Mammary epithelial cell (primary cell): ENCODE measurements at regions of chr15 and their contacts with region 1.

Region 1: GRCh38 chr15:96177279-96177678 is 153.2 kb upstream of the NR2F2 start:
- DNase-seq: no peak
- H3K4me3 ChIP-seq: no peak overlapping the region
- H3K27ac ChIP-seq: no peak overlapping the region
- H3K4me1 ChIP-seq: no peaks in the 10 kb centered on the region
- H3K27me3 ChIP-seq: no peaks in the 10 kb centered on the region
- CTCF ChIP-seq: no peak

Region 2: DNA sequence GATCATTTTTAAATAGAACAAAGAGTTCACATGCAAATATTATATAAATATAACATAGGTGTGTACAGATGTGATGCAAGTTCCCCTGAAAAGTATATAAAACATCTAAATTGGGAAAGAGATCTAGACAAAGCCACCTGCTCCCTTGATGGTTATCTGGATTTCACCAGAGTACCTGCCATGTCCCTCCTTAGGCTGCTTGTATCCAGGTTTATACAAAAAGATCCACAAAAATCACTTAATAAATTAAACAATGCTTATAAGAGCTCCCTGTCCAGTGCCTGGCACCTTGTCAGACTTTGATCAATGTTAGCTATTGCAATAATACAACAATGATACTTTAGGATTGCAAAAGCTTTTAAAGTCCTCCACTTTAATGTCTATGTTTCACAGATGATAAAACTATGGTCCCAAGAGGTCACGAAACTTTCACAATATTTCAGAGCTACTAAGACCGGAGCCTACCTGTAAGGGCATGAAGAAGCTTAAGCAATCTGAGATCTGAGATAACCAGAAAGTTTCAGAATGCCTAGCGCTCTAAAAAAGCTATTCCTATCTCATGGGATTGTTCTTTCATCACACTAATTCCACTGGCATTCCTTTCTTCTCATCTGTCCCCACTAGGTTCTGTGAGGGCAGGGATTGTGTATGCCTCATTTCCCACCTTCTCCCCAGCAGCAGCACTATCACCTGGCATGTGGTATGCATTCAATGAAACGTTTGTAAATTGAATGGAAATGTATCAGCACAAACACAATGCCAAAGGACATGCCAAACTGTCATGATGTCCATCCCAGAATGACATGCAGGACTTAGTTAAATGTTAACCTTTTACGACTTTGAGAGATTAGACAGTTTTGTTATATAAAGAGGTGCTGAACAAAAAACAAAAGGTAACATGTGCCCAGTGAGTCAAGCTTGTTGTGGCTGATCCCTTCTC is 48.3 kb after region 1 on chr15:
- CTCF ChIA-PET with region 1: no interaction called
- dilution Hi-C with region 1: loop called (anchors 5 kb)
- in situ Hi-C with region 1: no loop called
- intact Hi-C with region 1: no loop called
- DNase-seq: peak; percentile 76
- H3K4me3 ChIP-seq: no peak overlapping the region
- H3K27ac ChIP-seq: no peak overlapping the region
- H3K4me1 ChIP-seq: peaks cover 14% of the 10 kb centered on the region
- H3K27me3 ChIP-seq: no peaks in the 10 kb centered on the region
- CTCF ChIP-seq: no peak